CD8-positive, alpha-beta T cell (primary cell): ENCODE measurements at regions of chr15 and their contacts with region 1.

Region 1: DNA sequence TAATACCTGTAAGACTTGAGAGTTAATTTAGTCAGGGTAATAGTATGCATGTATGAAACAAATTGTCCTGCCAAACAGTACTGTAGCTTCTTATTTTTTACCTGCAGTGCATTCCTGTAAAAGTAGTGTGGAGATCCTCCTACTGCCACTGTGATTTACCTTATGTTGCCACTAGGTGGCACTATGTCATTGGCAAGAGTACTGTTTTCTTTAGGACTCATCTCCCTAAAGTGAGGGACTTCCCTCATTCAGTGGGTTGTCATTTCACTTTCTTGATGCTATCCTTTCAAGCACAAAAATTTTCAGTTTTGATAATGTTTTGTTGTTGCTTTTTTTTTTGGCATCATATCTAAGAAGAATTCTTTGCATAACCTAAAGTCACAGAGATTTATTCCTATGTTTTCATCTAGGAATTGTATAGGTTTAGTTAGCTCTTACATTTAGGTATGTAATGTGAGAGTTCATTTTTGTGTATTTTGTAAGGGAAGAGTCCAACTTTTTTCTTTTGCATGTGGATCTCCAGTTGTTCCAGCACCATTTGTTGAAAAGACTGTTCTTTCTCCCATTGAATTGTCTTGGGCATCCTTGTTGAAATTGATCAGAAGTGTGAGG is 105.7 kb downstream of the AKAP13 start:
- DNase-seq: peak in 8 of 9 experiments; percentile 43 to 85 (median 59)
- ATAC-seq: peak; percentile 86
- H3K4me3 ChIP-seq: no peak overlapping the region
- H3K4me3 Mint-ChIP-seq: no peak overlapping the region
- H3K27ac ChIP-seq: no peak overlapping the region
- H3K27ac Mint-ChIP-seq: no peak overlapping the region
- H3K4me1 ChIP-seq: peaks cover 35% of the 10 kb centered on the region
- H3K4me1 Mint-ChIP-seq: peaks cover 71% of the 10 kb centered on the region
- H3K27me3 ChIP-seq: no peaks in the 10 kb centered on the region
- H3K27me3 Mint-ChIP-seq: no peaks in the 10 kb centered on the region
- CTCF ChIP-seq: peak; percentile 92

Region 2: DNA sequence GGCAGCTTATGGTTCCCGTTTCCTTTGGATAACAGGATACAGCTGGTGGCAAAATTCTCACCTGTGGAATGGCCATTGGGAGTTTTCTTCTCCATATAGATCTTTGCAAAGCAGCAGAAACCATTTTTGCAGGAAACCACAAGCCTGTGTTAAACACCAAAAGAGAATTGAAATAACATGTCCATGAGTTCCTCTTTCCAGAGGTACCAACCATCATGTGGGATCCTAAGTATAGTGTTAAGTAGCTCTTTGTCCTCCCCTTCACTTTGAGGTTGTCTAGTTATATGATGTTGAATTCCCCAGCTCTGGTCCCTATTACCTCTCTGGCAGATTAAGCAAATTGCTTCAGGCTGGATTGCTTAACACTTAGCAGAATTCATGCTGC is 10.8 kb before region 1 on chr15:
- CTCF ChIA-PET with region 1: interaction called, 13 read pairs
- POLR2A ChIA-PET with region 1: interaction called, 3 read pairs
- intact Hi-C with region 1: no loop called
- DNase-seq: no peak
- ATAC-seq: no peak
- H3K4me3 ChIP-seq: no peak overlapping the region
- H3K4me3 Mint-ChIP-seq: no peak overlapping the region
- H3K27ac ChIP-seq: no peak overlapping the region
- H3K27ac Mint-ChIP-seq: no peak overlapping the region
- H3K4me1 ChIP-seq: peaks cover 66% of the 10 kb centered on the region
- H3K4me1 Mint-ChIP-seq: peaks cover 84% of the 10 kb centered on the region
- H3K27me3 ChIP-seq: no peaks in the 10 kb centered on the region
- H3K27me3 Mint-ChIP-seq: no peaks in the 10 kb centered on the region
- CTCF ChIP-seq: no peak

Region 3: DNA sequence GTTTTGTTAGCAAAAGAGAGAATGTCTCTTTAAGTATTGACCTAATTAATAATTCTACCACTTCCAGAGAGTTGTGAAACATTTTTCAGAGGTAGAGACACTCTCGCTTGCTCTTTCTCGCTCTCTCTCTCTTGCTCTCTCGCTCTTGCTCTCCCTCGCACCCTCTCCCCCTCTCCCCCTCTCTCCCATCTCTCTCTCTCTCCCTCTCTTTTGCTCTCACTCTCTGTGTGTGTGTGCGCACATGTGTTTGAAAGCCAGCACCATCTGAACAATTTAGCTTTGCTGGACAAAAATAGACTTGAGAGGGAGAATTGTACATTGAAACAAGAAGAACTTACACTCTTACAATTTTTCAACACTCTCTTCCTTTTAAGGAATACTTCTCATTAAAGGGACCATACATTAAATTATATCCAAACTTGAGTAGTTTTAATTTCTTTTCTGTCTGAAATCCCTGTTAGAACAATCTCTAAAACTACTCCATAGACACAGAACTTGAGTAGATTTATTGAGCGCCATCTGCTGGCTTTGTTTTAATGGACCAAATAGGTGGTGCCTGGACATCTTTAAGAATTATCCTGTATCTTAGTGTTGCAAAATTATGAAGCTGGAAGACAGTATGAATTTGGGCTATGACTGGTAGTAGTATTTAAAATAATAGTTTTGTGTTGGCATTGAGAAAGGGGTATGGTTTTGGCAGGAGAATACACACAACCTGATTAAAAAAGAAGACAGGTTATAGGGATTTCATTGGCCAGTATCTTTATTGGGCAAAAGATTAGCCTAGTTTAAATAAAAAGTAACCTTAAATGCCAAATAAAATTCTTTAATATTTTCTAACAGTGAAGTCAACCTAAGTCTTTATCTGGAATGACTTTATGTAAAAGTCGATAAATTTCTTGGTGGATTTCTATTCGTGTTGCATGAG is 19.0 kb after region 1 on chr15:
- CTCF ChIA-PET with region 1: interaction called, 8 read pairs
- POLR2A ChIA-PET with region 1: no interaction called
- intact Hi-C with region 1: loop called (anchors 2 kb)
- DNase-seq: peak in 7 of 9 experiments; percentile 11 to 70 (median 51)
- ATAC-seq: no peak
- H3K4me3 ChIP-seq: no peak overlapping the region
- H3K4me3 Mint-ChIP-seq: no peak overlapping the region
- H3K27ac ChIP-seq: no peak overlapping the region
- H3K27ac Mint-ChIP-seq: no peak overlapping the region
- H3K4me1 ChIP-seq: peaks cover 33% of the 10 kb centered on the region
- H3K4me1 Mint-ChIP-seq: peaks cover 69% of the 10 kb centered on the region
- H3K27me3 ChIP-seq: no peaks in the 10 kb centered on the region
- H3K27me3 Mint-ChIP-seq: no peaks in the 10 kb centered on the region
- CTCF ChIP-seq: peak; percentile 84

Region 4: DNA sequence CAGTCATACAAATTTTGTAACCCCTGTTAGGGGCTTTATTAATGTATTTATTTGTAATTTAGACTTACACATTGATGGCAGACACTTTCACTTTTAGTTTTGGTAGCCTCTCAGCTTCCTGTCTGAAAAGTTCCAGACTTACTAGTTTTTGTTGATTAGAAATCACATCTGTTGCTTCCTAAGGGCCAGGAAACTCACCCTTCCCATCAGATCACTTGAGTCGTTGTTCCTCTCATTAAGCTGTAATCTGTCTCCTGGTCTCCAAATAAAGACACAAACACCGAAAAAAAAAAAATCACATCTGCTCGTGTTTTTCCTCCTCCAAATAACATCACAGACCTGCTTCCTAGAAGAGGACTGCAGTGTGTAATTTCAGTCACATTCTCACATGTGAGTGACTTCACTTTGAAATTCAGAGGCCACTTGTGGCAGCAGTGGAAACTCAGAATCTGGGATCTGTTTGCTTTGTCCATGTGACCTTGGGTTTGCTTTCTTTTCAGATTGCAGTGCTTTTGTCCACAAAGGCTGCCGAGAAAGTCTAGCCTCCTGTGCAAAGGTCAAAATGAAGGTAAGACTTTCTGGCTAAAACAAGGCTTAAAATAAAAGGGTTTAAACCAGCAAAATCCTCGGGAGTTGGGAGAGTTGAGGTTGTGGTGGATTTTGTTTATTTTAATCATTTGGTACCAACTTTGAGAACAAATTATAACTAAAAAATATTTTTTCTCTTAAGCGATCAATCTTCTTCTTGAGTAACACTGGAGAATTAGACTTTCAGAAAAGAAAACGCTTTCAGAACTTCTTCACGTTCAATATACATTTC is 221.7 kb after region 1 on chr15:
- CTCF ChIA-PET with region 1: no interaction called
- POLR2A ChIA-PET with region 1: no interaction called
- intact Hi-C with region 1: loop called in 1 of 2 experiments (anchors 10 kb)
- DNase-seq: no peak
- ATAC-seq: peak; percentile 22
- H3K4me3 ChIP-seq: peak overlapping the region; percentile 32 to 40
- H3K4me3 Mint-ChIP-seq: peak overlapping the region; percentile 77
- H3K27ac ChIP-seq: peak overlapping the region; percentile 66 to 97
- H3K27ac Mint-ChIP-seq: peak overlapping the region; percentile 99
- H3K4me1 ChIP-seq: peaks cover 56% of the 10 kb centered on the region
- H3K4me1 Mint-ChIP-seq: peaks cover 82% of the 10 kb centered on the region
- H3K27me3 ChIP-seq: no peaks in the 10 kb centered on the region
- H3K27me3 Mint-ChIP-seq: no peaks in the 10 kb centered on the region
- CTCF ChIP-seq: no peak